GM12878 (cell line): ENCODE measurements at regions of chr3 and their contacts with region 1.

Region 1: GRCh38 chr3:65342084-65342683 is 654.4 kb upstream of the ADAMTS9 start:
- DNase-seq: no peak
- ATAC-seq: peak; percentile 92
- H3K4me3 ChIP-seq: no peak overlapping the region
- H3K27ac ChIP-seq: no peak overlapping the region
- H3K4me1 ChIP-seq: no peaks in the 10 kb centered on the region
- H3K27me3 ChIP-seq: no peaks in the 10 kb centered on the region
- CTCF ChIP-seq: peak; percentile 59 to 75 (median 63)
- EP300 ChIP-seq: no peak
- POLR2A ChIP-seq: no peak
- RAD21 ChIP-seq: peak; percentile 36; the same call in 1 of the 2 replicates

Region 2: GRCh38 chr3:65268426-65268825 is 73.8 kb before region 1 on chr3:
- CTCF ChIA-PET with region 1: no interaction called
- POLR2A ChIA-PET with region 1: no interaction called
- RAD21 ChIA-PET with region 1: no interaction called
- SMC1A ChIA-PET with region 1: no interaction called
- in situ Hi-C with region 1: no loop called
- intact Hi-C with region 1: no loop called
- DNase-seq: no peak
- ATAC-seq: no peak
- H3K4me3 ChIP-seq: no peak overlapping the region
- H3K27ac ChIP-seq: no peak overlapping the region
- H3K4me1 ChIP-seq: no peaks in the 10 kb centered on the region
- H3K27me3 ChIP-seq: no peaks in the 10 kb centered on the region
- CTCF ChIP-seq: no peak
- EP300 ChIP-seq: no peak
- POLR2A ChIP-seq: no peak
- RAD21 ChIP-seq: no peak

Region 3: DNA sequence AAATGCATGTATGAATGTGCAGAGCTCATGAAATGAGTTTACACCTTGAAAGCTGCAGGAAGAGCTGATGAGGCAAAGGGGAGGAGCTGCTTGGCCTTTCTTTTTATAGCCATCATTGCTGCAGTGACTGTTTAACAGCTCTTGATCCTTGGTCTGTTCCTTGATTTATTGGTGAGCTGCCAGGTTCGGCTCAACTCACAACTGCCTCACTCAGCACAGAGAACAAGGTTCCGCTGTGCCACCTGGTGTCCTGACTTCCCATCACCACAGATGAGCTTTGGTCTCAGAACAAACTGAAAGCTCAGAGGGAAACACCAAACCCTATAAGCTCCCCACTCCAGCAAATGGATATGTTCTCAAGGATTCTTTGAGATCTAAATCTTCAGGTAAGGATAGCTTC is 70.4 kb after region 1 on chr3:
- CTCF ChIA-PET with region 1: no interaction called
- POLR2A ChIA-PET with region 1: no interaction called
- RAD21 ChIA-PET with region 1: no interaction called
- SMC1A ChIA-PET with region 1: no interaction called
- in situ Hi-C with region 1: no loop called
- intact Hi-C with region 1: no loop called
- DNase-seq: no peak
- ATAC-seq: no peak
- H3K4me3 ChIP-seq: no peak overlapping the region
- H3K27ac ChIP-seq: no peak overlapping the region
- H3K4me1 ChIP-seq: no peaks in the 10 kb centered on the region
- H3K27me3 ChIP-seq: no peaks in the 10 kb centered on the region
- CTCF ChIP-seq: no peak
- EP300 ChIP-seq: no peak
- POLR2A ChIP-seq: no peak
- RAD21 ChIP-seq: no peak

Region 4: DNA sequence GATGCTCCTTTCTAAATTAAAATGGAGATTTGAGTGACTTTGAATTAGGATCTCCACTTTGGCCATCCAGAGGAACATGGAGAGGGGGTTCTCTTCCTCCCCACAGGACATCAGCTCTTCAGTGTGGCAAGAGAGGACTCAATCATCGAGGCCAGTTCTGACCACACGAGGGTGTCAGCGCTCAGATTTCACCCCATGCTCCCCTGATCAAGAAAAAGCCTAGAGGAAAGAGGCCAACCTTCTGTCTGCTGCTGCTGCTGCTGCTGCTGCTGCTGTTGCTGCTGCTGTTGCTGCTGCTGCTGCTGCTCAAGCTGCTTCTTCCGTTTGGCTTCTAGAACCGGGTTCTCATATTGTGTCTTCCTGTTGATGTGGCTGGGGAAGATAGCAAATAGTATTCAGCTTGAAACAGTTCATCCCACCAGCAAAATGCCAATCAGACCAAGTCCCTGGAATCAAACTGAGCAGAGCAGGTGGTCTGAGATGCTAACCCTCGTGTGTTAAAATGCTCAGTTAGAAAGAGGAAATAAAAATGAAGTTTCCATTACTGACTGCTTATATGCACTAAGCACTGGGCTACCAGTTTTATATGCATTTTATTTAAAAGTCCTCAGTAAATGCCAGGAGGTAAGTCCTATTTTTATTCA is 97.6 kb after region 1 on chr3:
- CTCF ChIA-PET with region 1: no interaction called
- POLR2A ChIA-PET with region 1: no interaction called
- RAD21 ChIA-PET with region 1: no interaction called
- SMC1A ChIA-PET with region 1: no interaction called
- in situ Hi-C with region 1: no loop called
- intact Hi-C with region 1: loop called (anchors 1 kb)
- DNase-seq: no peak
- ATAC-seq: peak; percentile 76
- H3K4me3 ChIP-seq: no peak overlapping the region
- H3K27ac ChIP-seq: no peak overlapping the region
- H3K4me1 ChIP-seq: no peaks in the 10 kb centered on the region
- H3K27me3 ChIP-seq: no peaks in the 10 kb centered on the region
- CTCF ChIP-seq: peak in 1 of 3 experiments; percentile 21; a peak in 1 of 6 replicates
- EP300 ChIP-seq: no peak
- POLR2A ChIP-seq: no peak
- RAD21 ChIP-seq: 0 out of 2 replicates have a peak, but pooled peaks have one; percentile 14